AG04450 (cell line): ENCODE measurements at regions of chr11 and their contacts with region 1.

Region 1: DNA sequence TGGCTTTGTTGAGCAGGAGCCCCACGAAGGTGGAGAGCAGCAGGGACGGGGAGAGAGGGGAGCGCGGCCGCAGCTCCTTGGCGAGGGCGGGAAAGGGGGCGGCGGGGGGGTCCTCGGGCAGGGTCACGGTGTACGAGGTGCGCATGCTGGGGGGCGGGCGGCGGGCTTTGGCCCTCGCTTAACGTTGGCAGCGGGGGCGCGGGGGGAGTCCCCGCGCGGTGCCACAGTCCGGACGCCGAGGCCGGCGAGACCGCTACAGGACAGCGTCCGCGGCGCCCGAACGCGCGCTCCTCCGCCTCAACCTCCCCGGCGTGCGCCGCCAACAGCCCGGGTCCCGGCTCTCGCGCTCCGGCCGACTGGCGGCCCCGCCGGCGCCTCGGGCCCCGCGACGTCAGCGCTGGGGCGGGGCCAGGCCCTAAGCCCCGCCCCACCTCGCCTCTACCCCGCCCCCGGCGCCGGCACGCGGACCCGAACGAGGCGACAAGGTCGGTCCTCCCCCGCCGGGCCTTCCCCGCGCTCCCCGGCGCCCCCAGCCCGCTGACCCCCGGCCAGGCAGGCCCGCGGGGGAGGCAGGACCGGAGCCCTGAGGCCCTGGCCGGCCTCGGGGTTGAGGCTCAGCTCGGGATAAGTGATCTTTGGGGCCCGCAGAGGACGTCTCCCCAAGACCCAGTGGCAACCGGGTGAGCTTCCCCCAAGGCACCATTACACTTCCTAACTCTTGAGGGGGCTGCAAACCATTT is 17.5 kb downstream of the USP2 start:
- DNase-seq: no peak
- H3K4me3 ChIP-seq: peak overlapping the region; percentile 51; the same call in 1 of the 2 replicates
- H3K27ac ChIP-seq: no peak overlapping the region
- H3K27me3 ChIP-seq: peaks cover 15% of the 10 kb centered on the region
- CTCF ChIP-seq: no peak

Region 2: GRCh38 chr11:119339589-119340343 is 24.3 kb before region 1 on chr11:
- CTCF ChIA-PET with region 1: interaction called, 14 read pairs
- POLR2A ChIA-PET with region 1: interaction called, 14 read pairs
- DNase-seq: no peak
- H3K4me3 ChIP-seq: peak overlapping the region; percentile 64
- H3K27ac ChIP-seq: peak overlapping the region; percentile 39
- H3K27me3 ChIP-seq: peaks cover 15% of the 10 kb centered on the region
- CTCF ChIP-seq: peak; percentile 83

Region 3: GRCh38 chr11:119373921-119374631 is 10.1 kb after region 1 on chr11:
- CTCF ChIA-PET with region 1: interaction called, 102 read pairs
- POLR2A ChIA-PET with region 1: interaction called, 3 read pairs
- DNase-seq: peak; percentile 51
- H3K4me3 ChIP-seq: no peak overlapping the region
- H3K27ac ChIP-seq: no peak overlapping the region
- H3K27me3 ChIP-seq: peaks cover 12% of the 10 kb centered on the region
- CTCF ChIP-seq: peak; percentile 97